ENCODE measurements at regions of chr17 and their contacts with region 1.

Region 1: GRCh38 chr17:54968262-54968987 is at the starts of genes COX11 and STXBP4:
- DNase-seq: peak; percentile 97
- ATAC-seq: peak; percentile 97
- H3K4me3 ChIP-seq: peak within 1 kb of the TSS; percentile 83
- H3K27ac ChIP-seq: peak within 1 kb of the TSS; percentile 87
- H3K4me1 ChIP-seq: no peaks in the 10 kb centered on the region
- H3K27me3 ChIP-seq: no peaks in the 10 kb centered on the region
- CTCF ChIP-seq: no peak
- POLR2A ChIP-seq: 0 out of 2 replicates have a peak, but pooled peaks have one; percentile 32
- RAD21 ChIP-seq: no peak
- total RNA-seq, gene COX11: 29.4 and 43.6 TPM in 2 replicates
- total RNA-seq, gene STXBP4: 20.4 and 31.4 TPM in 2 replicates

Region 2: GRCh38 chr17:54948380-54948779 is 20.0 kb before region 1 on chr17:
- CTCF ChIA-PET with region 1: no interaction called
- POLR2A ChIA-PET with region 1: no interaction called
- dilution Hi-C with region 1: no loop called
- in situ Hi-C with region 1: no loop called
- intact Hi-C with region 1: loop called (anchors 1 kb)
- DNase-seq: peak; percentile 98
- ATAC-seq: peak; percentile 98
- H3K4me3 ChIP-seq: no peak overlapping the region
- H3K27ac ChIP-seq: no peak overlapping the region
- H3K4me1 ChIP-seq: peaks cover 8% of the 10 kb centered on the region
- H3K27me3 ChIP-seq: peaks cover 4% of the 10 kb centered on the region; the same call in 1 of the 2 replicates
- CTCF ChIP-seq: no peak
- POLR2A ChIP-seq: no peak
- RAD21 ChIP-seq: no peak

Measured in IMR-90 (cell line).